Activated CD4-positive, alpha-beta T cell treated with anti-CD3 and anti-CD28 coated beads for 36 hours (primary cell): ENCODE measurements at regions of chr15 and their contacts with region 1.

Region 1: DNA sequence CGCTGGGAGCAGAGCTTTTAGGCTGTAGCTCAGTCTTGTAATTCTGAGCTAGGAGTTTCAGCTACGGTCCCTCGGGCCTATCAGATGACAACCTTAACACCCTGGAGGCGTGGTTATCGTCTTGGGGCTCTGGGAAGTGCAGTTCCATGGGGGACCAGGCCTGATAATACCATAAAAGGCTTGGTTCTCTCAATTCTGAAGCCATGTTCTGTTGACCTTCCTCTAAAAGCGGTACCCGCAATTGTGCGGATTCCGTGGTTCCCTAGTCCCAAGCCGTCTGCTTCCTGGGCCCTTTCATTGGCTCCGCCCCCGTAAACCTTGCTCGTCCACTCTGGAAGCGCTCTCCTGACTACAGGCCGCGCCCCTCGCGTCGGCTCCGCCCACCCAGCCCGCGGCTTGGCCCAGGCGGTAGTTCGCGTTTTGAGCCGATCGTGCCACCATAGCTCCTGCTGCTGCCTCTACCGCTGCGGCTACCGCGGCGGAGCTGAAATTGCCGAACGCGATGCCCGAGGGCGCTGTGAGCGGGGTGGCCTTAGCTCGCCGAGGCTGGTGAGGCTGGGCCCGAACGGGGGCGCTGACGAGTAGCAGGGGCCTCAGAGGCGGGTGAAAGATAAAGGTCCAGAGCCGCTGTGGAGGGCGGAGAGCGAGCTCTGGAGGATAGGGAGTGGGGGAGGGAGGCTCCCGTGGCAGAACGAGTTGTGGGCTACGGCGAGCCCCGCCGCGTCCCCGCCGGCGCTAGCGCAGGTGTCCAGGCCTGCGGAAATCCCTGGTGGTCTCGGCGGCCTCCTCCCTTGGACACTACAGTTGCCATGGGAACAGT is at the start of gene MAPKBP1:
- DNase-seq: peak; percentile 99
- ATAC-seq: peak; percentile 88
- H3K4me3 Mint-ChIP-seq: peak within 1 kb of the TSS; percentile 90
- H3K27ac Mint-ChIP-seq: peak within 1 kb of the TSS; percentile 84
- H3K4me1 Mint-ChIP-seq: peaks cover 56% of the 10 kb centered on the region
- H3K27me3 Mint-ChIP-seq: no peaks in the 10 kb centered on the region
- total RNA-seq, gene MAPKBP1: 16.1 to 19.0 TPM

Region 2: DNA sequence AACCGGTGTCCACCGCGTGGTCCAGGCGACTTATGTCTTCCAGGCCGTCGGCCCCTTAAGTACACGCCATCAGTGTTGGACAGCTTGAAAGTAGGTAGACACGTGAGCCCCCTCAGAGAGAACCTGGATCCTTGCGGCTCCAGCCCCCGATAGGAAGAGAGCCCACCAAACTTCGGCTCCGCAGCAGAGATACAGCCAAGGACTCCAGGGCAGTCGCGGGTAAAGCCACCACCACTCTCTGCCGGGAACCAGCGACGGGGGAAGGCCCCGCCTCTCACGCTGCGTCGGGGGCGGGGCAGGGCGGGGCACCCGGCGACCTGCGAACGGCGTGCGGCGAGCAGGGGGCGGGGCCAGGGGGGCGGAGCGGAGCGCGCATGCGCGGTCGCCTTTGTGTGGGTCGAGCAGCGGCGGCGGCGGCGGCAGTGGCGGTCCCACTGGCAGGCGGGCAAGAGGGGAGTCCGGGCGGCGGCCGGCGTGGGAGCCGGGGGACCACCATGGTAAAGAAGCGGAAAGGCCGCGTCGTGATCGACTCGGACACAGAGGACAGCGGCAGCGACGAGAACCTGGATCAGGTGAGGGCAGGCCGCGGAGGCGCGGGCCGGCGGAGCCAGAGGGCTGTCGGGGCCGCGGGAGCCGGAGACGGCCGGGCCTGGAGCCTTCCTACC is 357.4 kb before region 1 on chr15 and contains the start of gene RTF1:
- CTCF ChIA-PET with region 1: interaction called, 3 read pairs
- POLR2A ChIA-PET with region 1: no interaction called
- intact Hi-C with region 1: loop called in 1 of 2 experiments (anchors 5 kb)
- DNase-seq: peak; percentile 98
- ATAC-seq: peak; percentile 94
- H3K4me3 Mint-ChIP-seq: peak within 1 kb of the TSS; percentile 88
- H3K27ac Mint-ChIP-seq: peak within 1 kb of the TSS; percentile 92
- H3K4me1 Mint-ChIP-seq: peaks cover 38% of the 10 kb centered on the region
- H3K27me3 Mint-ChIP-seq: no peaks in the 10 kb centered on the region
- total RNA-seq, gene RTF1: 29.4 to 32.3 TPM

Region 3: GRCh38 chr15:41544650-41545015 is 229.6 kb before region 1 on chr15:
- CTCF ChIA-PET with region 1: interaction called, 5 read pairs
- POLR2A ChIA-PET with region 1: interaction called, 3 read pairs
- intact Hi-C with region 1: loop called in 1 of 2 experiments (anchors 1 kb)
- DNase-seq: peak; percentile 21
- ATAC-seq: no peak
- H3K4me3 Mint-ChIP-seq: peak overlapping the region; percentile 95
- H3K27ac Mint-ChIP-seq: peak overlapping the region; percentile 91
- H3K4me1 Mint-ChIP-seq: peaks cover 12% of the 10 kb centered on the region
- H3K27me3 Mint-ChIP-seq: no peaks in the 10 kb centered on the region

Region 4: DNA sequence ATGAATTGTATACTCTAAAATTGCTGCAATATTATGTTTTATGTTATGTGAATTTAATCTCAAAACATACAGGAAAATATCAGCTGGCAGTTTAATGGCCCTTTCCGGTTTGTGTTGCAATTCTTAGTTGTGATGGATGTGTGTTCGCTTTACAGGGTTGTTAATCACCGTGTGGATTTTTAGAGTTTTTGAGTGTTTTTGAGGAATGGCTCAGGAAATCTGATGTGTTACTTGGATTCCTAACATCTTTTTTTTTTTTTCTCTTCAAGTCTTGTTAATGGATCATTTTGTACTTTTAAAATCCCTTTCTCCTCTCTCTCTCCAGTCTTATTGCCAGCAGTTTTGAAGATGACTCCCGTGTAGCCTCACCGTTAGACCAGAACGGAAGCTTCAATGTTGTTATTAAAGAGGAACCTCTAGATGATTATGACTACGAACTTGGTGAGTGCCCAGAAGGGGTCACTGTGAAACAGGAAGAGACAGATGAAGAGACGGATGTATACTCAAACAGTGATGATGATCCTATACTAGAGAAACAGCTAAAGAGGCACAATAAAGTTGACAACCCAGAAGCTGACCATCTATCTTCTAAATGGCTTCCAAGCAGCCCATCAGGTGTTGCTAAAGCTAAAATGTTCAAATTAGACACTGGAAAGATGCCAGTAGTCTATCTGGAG is 78.4 kb before region 1 on chr15:
- CTCF ChIA-PET with region 1: interaction called, 9 read pairs
- POLR2A ChIA-PET with region 1: no interaction called
- intact Hi-C with region 1: loop called in 1 of 2 experiments (anchors 5 kb)
- DNase-seq: peak; percentile 66
- ATAC-seq: peak; percentile 93
- H3K4me3 Mint-ChIP-seq: peak overlapping the region; percentile 2
- H3K27ac Mint-ChIP-seq: peak overlapping the region; percentile 78
- H3K4me1 Mint-ChIP-seq: peaks cover 43% of the 10 kb centered on the region
- H3K27me3 Mint-ChIP-seq: no peaks in the 10 kb centered on the region

Region 5: GRCh38 chr15:41827880-41828806 is 53.9 kb after region 1 on chr15 and contains the start of gene JMJD7:
- CTCF ChIA-PET with region 1: interaction called, 18 read pairs
- POLR2A ChIA-PET with region 1: interaction called, 7 read pairs
- intact Hi-C with region 1: loop called (anchors 1 kb)
- DNase-seq: peak; percentile 99
- ATAC-seq: peak; percentile 96
- H3K4me3 Mint-ChIP-seq: peak within 1 kb of the TSS; percentile 80
- H3K27ac Mint-ChIP-seq: peak within 1 kb of the TSS; percentile 69
- H3K4me1 Mint-ChIP-seq: peaks cover 41% of the 10 kb centered on the region
- H3K27me3 Mint-ChIP-seq: no peaks in the 10 kb centered on the region
- total RNA-seq, gene JMJD7: 17.1 to 17.6 TPM

Region 6: DNA sequence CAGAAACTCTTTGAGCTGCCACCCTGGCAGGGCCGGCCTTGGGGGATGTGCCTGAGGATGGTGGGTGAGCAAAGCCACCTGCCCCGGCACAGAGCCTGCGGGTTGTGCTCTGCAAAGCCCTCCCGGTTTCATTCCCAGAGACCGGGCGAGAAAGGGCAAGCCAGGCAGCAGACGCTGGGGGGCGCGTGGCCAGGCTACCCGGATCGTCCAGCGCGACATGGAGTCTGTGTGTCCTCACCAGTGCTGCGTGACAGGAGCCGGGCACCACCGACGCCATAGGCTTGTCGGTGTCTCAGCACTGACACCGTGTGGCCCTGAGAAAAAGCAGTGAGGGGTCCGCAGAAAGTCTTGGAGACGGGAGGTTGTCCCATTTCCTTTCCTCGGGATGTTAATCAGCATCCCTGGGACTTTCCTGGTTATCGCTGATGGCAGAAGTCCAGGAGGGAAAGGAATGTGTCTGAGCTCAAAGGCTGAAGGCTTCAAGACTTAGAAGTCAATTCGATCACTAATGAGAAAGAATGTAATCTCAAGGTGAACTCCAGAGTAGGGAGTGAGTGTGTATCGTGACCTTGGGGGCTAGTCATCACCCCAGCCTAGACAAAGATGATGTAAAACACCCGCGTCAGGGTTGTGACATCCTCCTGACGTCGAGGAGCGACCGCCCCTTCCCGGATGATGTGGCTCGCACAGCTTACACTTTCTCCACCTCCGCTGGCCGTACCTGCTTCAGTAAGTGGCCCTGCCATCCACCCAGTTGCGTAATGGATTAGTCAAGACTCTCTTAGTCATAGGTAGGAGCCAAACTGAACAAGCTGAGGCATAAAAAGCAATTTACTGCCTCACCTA is 282.9 kb after region 1 on chr15:
- CTCF ChIA-PET with region 1: no interaction called
- POLR2A ChIA-PET with region 1: no interaction called
- intact Hi-C with region 1: loop called (anchors 1 to 5 kb)
- DNase-seq: peak; percentile 83
- ATAC-seq: peak; percentile 86
- H3K4me3 Mint-ChIP-seq: peak overlapping the region; percentile 49
- H3K27ac Mint-ChIP-seq: peak overlapping the region; percentile 52
- H3K4me1 Mint-ChIP-seq: peaks cover 7% of the 10 kb centered on the region
- H3K27me3 Mint-ChIP-seq: peaks cover 9% of the 10 kb centered on the region